Activated CD4-positive, alpha-beta T cell treated with anti-CD3 and anti-CD28 coated beads, Interleukin-2, amount 10 ng/mL, durations not matched to agents 24 days and 14 days (primary cell): ENCODE measurements at regions of chr19 and their contacts with region 1.

Region 1: GRCh38 chr19:48363810-48364563 is at the starts of genes SYNGR4 and TMEM143:
- DNase-seq: peak; percentile 99
- H3K4me3 Mint-ChIP-seq: peak within 1 kb of the TSS; percentile 87
- H3K27ac Mint-ChIP-seq: peak within 1 kb of the TSS; percentile 97
- H3K4me1 Mint-ChIP-seq: peaks cover 16% of the 10 kb centered on the region
- H3K27me3 Mint-ChIP-seq: peaks cover 4% of the 10 kb centered on the region
- total RNA-seq, gene SYNGR4: 0.33 TPM in 1 of 2 replicates, not detected in the other
- total RNA-seq, gene TMEM143: 13.1 and 13.4 TPM in 2 replicates

Region 2: GRCh38 chr19:48221628-48222027 is 142.4 kb before region 1 on chr19:
- intact Hi-C with region 1: no loop called
- DNase-seq: no peak
- H3K4me3 Mint-ChIP-seq: no peak overlapping the region
- H3K27ac Mint-ChIP-seq: no peak overlapping the region
- H3K4me1 Mint-ChIP-seq: no peaks in the 10 kb centered on the region
- H3K27me3 Mint-ChIP-seq: no peaks in the 10 kb centered on the region

Region 3: GRCh38 chr19:48271531-48272151 is 92.3 kb before region 1 on chr19:
- intact Hi-C with region 1: no loop called
- DNase-seq: peak; percentile 72
- H3K4me3 Mint-ChIP-seq: peak overlapping the region; percentile 93
- H3K27ac Mint-ChIP-seq: peak overlapping the region; percentile 53
- H3K4me1 Mint-ChIP-seq: peaks cover 15% of the 10 kb centered on the region
- H3K27me3 Mint-ChIP-seq: peaks cover 20% of the 10 kb centered on the region

Region 4: DNA sequence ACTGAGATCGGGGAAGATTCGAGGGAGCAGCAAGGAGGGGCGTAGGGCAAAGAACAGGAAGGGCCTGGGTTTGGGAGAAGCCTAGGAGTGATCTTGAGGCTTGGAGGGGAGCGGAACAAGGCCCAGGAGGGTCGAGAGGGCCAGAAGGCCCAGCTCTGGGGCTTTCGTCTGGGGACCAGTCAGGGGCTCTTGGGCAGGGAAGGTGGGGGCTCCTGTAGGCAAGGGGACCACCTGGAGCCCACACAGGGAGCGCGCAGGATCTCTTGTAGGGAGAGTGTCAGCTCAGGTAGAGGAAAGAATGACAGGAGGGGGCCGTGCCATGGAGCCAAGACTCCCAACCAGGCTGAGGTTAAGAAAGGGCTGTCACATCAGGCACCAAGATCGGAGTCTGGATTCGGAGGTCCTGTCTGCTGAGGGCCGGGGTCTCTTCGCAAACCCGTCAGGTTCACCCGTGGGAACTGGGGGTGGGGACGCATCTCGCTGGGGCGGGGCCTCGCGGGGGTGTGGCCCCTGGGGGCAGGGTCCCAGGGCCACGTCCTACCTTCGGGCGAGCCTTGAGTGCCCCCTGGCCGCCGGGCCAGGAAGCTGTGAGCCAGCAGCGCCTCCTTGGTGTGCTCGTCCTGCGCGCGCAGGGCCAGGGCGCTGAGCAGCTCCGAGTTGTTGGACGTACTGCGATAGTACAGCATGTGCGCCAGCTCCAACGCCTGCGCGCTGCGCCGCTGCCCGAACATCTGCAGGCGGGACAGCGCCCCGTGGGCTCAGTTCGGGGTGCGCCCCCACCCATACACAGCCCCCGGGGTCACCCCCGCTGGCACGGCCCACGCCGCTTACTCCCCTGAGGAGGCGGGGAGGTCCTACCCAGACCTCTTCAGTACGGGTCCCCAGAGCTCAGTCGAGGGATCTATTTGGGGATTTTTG is 30.3 kb before region 1 on chr19:
- intact Hi-C with region 1: loop called (anchors 1 kb)
- DNase-seq: peak; percentile 98
- H3K4me3 Mint-ChIP-seq: peak overlapping the region; percentile 91
- H3K27ac Mint-ChIP-seq: peak overlapping the region; percentile 90
- H3K4me1 Mint-ChIP-seq: peaks cover 52% of the 10 kb centered on the region
- H3K27me3 Mint-ChIP-seq: no peaks in the 10 kb centered on the region

Region 5: GRCh38 chr19:48419158-48419920 is 55.4 kb after region 1 on chr19:
- intact Hi-C with region 1: loop called (anchors 1 kb)
- DNase-seq: peak; percentile 92
- H3K4me3 Mint-ChIP-seq: peak overlapping the region; percentile 59
- H3K27ac Mint-ChIP-seq: peak overlapping the region; percentile 83
- H3K4me1 Mint-ChIP-seq: peaks cover 24% of the 10 kb centered on the region
- H3K27me3 Mint-ChIP-seq: peaks cover 13% of the 10 kb centered on the region

Region 6: DNA sequence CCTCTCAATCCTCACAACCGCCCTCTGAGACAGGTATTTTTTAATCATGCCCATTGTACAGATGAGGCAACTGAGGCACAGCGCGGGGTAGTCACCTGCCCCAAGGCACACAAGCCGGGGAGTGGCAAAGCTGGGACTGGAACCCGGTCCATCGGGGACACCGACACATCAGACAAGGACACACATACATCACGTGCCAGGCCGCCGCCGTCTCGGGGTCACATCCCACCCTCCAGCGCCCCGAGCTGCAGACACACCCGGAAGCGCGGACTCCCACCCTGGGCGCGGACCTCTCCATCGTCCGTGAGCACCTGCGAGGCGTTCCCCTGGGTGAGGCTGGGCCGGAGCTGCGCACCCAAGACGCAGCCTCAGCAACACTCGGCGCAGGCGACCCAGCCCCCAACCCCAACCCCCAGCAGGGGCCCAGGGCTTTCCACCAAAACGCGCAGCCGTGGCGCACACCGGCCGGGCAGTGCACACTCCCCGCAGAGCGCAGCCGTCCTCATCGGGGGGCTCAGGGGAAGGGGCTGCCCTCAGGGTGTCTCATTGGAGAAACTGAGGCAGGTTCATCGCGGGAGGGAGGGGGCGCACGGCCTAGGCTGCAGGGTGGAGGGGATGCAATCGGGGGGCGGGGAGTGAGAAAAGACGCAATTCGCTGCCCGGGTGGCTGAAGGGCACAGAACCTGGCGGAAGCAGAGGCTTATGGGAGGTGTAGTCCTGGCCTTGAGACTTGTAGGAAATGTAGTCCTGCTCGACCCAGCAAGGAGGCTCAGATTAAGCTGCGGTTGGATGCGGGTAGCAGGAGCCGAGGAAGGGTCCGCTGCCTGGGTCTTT is 149.5 kb after region 1 on chr19:
- intact Hi-C with region 1: loop called (anchors 5 kb)
- DNase-seq: peak; percentile 92
- H3K4me3 Mint-ChIP-seq: no peak overlapping the region
- H3K27ac Mint-ChIP-seq: peak overlapping the region; percentile 67
- H3K4me1 Mint-ChIP-seq: peaks cover 10% of the 10 kb centered on the region
- H3K27me3 Mint-ChIP-seq: no peaks in the 10 kb centered on the region